ENCODE measurements at regions of chr22 and their contacts with region 1.

Region 1: GRCh38 chr22:23248583-23248982 is 68.3 kb downstream of the BCR start:
- DNase-seq: no peak
- ATAC-seq: peak; percentile 57; the same call in 1 of the 2 replicates
- H3K4me3 ChIP-seq: no peak overlapping the region
- H3K27ac ChIP-seq: 0 out of 2 replicates have a peak overlapping the region, but pooled peaks have one; percentile 3
- H3K4me1 ChIP-seq: peaks cover 20 to 53% of the 10 kb centered on the region in 2 experiments
- H3K27me3 ChIP-seq: no peaks in the 10 kb centered on the region
- CTCF ChIP-seq: no peak
- POLR2A ChIP-seq: no peak
- RAD21 ChIP-seq: no peak

Region 2: DNA sequence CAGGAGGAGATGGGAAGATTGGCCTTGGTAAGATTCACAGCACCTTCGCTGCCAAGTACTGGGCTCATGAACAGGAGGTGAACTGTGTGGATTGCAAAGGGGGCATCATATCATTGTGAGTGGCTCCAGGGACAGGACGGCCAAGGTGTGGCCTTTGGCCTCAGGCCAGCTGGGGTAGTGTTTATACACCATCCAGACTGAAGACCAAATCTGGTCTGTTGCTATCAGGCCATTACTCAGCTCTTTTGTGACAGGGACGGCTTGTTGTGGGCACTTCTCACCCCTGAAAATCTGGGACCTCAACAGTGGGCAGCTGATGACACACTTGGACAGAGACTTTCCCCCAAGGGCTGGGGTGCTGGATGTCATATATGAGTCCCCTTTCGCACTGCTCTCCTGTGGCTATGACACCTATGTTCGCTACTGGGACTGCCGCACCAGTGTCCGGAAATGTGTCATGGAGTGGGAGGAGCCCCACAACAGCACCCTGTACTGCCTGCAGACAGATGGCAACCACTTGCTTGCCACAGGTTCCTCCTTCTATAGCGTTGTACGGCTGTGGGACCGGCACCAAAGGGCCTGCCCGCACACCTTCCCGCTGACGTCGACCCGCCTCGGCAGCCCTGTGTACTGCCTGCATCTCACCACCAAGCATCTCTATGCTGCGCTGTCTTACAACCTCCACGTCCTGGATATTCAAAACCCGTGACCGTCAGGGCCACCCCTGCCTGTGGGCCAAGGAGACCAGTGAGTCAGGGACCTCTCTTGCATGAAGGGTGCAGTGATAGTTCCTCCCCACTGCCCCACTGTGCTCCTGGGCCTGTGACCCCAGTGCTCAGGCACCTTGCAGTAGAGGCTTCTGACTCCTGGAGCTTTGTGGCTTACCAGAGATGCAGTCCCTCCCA is 15.3 kb after region 1 on chr22:
- CTCF ChIA-PET with region 1: no interaction called
- POLR2A ChIA-PET with region 1: no interaction called
- RAD21 ChIA-PET with region 1: no interaction called
- intact Hi-C with region 1: no loop called
- DNase-seq: no peak
- ATAC-seq: no peak; the same call in 1 of the 2 replicates
- H3K4me3 ChIP-seq: no peak overlapping the region
- H3K27ac ChIP-seq: no peak overlapping the region
- H3K4me1 ChIP-seq: no peaks in the 10 kb centered on the region
- H3K27me3 ChIP-seq: no peaks in the 10 kb centered on the region
- CTCF ChIP-seq: no peak
- POLR2A ChIP-seq: no peak
- RAD21 ChIP-seq: no peak

Region 3: GRCh38 chr22:24005201-24005600 is 756.6 kb after region 1 on chr22 and contains the start of gene GSTT4:
- CTCF ChIA-PET with region 1: no interaction called
- POLR2A ChIA-PET with region 1: no interaction called
- RAD21 ChIA-PET with region 1: no interaction called
- intact Hi-C with region 1: loop called (anchors 5 kb)
- DNase-seq: no peak
- ATAC-seq: no peak
- H3K4me3 ChIP-seq: no peak within 1 kb of the TSS
- H3K27ac ChIP-seq: no peak within 1 kb of the TSS
- H3K4me1 ChIP-seq: peaks cover 0 to 7% of the 10 kb centered on the region in 2 experiments; a peak in 2 of 4 replicates
- H3K27me3 ChIP-seq: no peaks in the 10 kb centered on the region
- CTCF ChIP-seq: no peak
- POLR2A ChIP-seq: no peak
- RAD21 ChIP-seq: no peak
- total RNA-seq, gene GSTT4: not detected